Psoas muscle (tissue), 8 donors: ENCODE measurements at regions of chr6 and their contacts with region 1.

Region 1: GRCh38 chr6:28349892-28350737 is at the start of gene ZKSCAN3:
- DNase-seq: peak; percentile 77 to 88
- ATAC-seq: peak; percentile 82 to 98 (median 91)
- H3K4me3 ChIP-seq: peak within 1 kb of the TSS; percentile 81
- H3K27ac ChIP-seq: peak within 1 kb of the TSS; percentile 92
- H3K4me1 ChIP-seq: peaks cover 29% of the 10 kb centered on the region
- H3K27me3 ChIP-seq: peaks cover 0 to 3% (median 0%) of the 10 kb centered on the region in 3 donors
- CTCF ChIP-seq: no peak
- total RNA-seq, gene ZKSCAN3: 1.5 to 4.6 (median 2.9) TPM

Region 2: DNA sequence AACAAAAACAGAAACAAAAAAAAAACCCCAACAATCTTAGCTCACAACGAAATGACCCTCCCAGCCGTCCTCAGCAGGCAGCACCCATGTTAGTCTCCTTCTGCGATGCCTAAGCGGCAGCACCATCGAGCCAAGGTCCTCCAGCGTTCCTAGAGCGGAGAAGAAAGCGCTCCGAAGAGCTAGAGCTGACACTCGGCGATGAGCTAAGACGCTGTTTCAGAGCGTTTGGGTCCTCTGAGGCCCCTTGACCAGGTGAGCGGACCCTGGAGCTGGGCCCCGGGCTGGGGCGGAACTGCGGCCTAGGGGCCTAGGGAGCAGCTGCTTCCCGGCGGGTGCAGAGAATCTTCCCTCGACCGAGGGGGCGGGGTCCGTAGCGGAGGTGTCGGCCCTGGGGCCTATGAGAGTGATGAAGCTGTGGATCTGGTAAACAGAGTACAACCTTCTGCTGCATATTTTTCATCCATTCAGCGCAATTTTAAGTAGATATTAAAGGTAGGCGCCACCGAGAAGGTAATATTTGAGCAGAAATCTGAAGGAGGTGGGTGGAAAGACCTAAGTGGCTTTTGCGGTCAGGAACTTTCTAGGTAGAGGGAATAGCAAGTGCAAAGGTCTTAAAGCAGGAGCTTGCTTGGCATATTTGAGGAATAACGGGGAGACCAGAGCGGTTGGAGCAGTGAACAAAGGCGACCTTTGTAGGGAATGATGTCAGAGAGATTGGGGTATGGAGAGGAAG is 83.0 kb before region 1 on chr6 and contains the start of gene ZSCAN26:
- intact Hi-C with region 1: loop called (anchors 5 kb)
- DNase-seq: peak; percentile 88 to 93
- ATAC-seq: peak; percentile 95 to 99 (median 97)
- H3K4me3 ChIP-seq: peak within 1 kb of the TSS; percentile 77
- H3K27ac ChIP-seq: peak within 1 kb of the TSS; percentile 78
- H3K4me1 ChIP-seq: peaks cover 27% of the 10 kb centered on the region
- H3K27me3 ChIP-seq: no peaks in the 10 kb centered on the region
- CTCF ChIP-seq: no peak
- total RNA-seq, gene ZSCAN26: 6.9 to 12.9 (median 10.1) TPM

Region 3: DNA sequence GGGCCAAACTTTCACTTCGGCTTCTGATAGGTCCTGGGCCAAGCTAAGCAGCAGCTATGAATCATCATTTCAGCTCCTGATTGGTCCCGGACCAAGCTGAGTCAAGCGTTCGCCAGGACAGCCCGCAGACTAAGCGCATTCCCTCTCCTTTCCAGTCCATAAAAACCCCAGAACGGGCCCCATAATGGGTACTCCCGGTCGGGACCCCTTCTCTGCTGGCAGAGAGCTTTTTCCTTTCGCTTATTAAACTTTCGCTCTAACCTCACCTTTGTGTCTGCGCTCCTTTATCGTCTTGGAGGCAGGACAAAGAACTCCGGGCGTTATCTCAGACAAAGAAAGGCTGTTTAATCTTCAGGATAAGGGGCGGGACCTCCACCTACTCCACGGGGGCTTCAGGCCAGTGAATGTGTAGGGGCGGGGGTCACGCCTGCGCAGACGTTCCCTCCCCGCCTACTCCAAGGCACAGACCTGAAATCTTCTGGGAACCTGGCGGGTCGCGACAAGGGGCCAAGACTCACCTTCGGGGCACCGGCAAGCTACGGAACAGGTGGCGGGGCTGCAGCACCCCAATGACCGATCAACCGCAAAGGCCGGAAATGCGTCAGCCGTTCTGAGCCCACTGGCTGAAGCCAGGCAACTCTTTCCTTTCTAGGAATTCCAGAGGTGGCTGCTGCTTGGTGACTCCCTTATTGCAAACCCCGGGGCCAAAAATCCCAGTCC is 14.4 kb before region 1 on chr6 and contains the start of gene ZSCAN31:
- intact Hi-C with region 1: loop called in 1 of 2 experiments (anchors 1 kb)
- DNase-seq: peak; percentile 91 to 95
- ATAC-seq: peak; percentile 96 to 98 (median 98)
- H3K4me3 ChIP-seq: peak within 1 kb of the TSS; percentile 90
- H3K27ac ChIP-seq: peak within 1 kb of the TSS; percentile 96
- H3K4me1 ChIP-seq: peaks cover 8% of the 10 kb centered on the region
- H3K27me3 ChIP-seq: no peaks in the 10 kb centered on the region
- CTCF ChIP-seq: no peak
- total RNA-seq, gene ZSCAN31: 4.8 to 10.8 (median 7.7) TPM